ENCODE measurements at regions of chr11 and their contacts with region 1.

Region 1: GRCh38 chr11:66616379-66617154 is at the start of gene RBM14:
- DNase-seq: peak; percentile 99 to 100 (median 99)
- H3K4me3 ChIP-seq: peak within 1 kb of the TSS; percentile 70 to 99
- H3K4me3 Mint-ChIP-seq: peak within 1 kb of the TSS; percentile 96 to 100 (median 98)
- H3K27ac ChIP-seq: peak within 1 kb of the TSS; percentile 97
- H3K27ac Mint-ChIP-seq: peak within 1 kb of the TSS; percentile 98 to 100 (median 99)
- H3K4me1 ChIP-seq: peaks cover 40% of the 10 kb centered on the region
- H3K4me1 Mint-ChIP-seq: peaks cover 30 to 63% (median 40%) of the 10 kb centered on the region in 4 donors
- H3K27me3 ChIP-seq: no peaks in the 10 kb centered on the region
- H3K27me3 Mint-ChIP-seq: no peaks in the 10 kb centered on the region
- total RNA-seq, gene RBM14: 158 to 196 TPM

Region 2: GRCh38 chr11:65625628-65626342 is 990.8 kb before region 1 on chr11:
- CTCF ChIA-PET with region 1: no interaction called
- POLR2A ChIA-PET with region 1: no interaction called
- intact Hi-C with region 1: no loop called
- DNase-seq: peak in 4 of 5 donors; percentile 57 to 65 (median 62)
- H3K4me3 ChIP-seq: no peak overlapping the region
- H3K4me3 Mint-ChIP-seq: no peak overlapping the region
- H3K27ac ChIP-seq: no peak overlapping the region
- H3K27ac Mint-ChIP-seq: peak overlapping the region in 3 of 7 donors; percentile 60 to 85 (median 73)
- H3K4me1 ChIP-seq: no peaks in the 10 kb centered on the region
- H3K4me1 Mint-ChIP-seq: peaks cover 6 to 18% (median 6%) of the 10 kb centered on the region in 4 donors
- H3K27me3 ChIP-seq: no peaks in the 10 kb centered on the region
- H3K27me3 Mint-ChIP-seq: no peaks in the 10 kb centered on the region

Region 3: GRCh38 chr11:66480117-66480938 is 136.2 kb before region 1 on chr11 and contains the start of gene DPP3:
- CTCF ChIA-PET with region 1: no interaction called
- POLR2A ChIA-PET with region 1: interaction called, 10 read pairs
- intact Hi-C with region 1: no loop called
- DNase-seq: peak; percentile 94 to 96 (median 96)
- H3K4me3 ChIP-seq: peak within 1 kb of the TSS; percentile 88 to 90
- H3K4me3 Mint-ChIP-seq: peak within 1 kb of the TSS; percentile 87 to 96 (median 90)
- H3K27ac ChIP-seq: peak within 1 kb of the TSS; percentile 81
- H3K27ac Mint-ChIP-seq: peak within 1 kb of the TSS; percentile 78 to 94 (median 91)
- H3K4me1 ChIP-seq: peaks cover 20% of the 10 kb centered on the region
- H3K4me1 Mint-ChIP-seq: peaks cover 13 to 48% (median 21%) of the 10 kb centered on the region in 4 donors
- H3K27me3 ChIP-seq: no peaks in the 10 kb centered on the region
- H3K27me3 Mint-ChIP-seq: no peaks in the 10 kb centered on the region
- total RNA-seq, gene DPP3: 21.0 to 24.0 TPM

Region 4: GRCh38 chr11:66568124-66568916 is 48.2 kb before region 1 on chr11 and contains the start of gene CTSF:
- CTCF ChIA-PET with region 1: no interaction called
- POLR2A ChIA-PET with region 1: interaction called, 12 read pairs
- intact Hi-C with region 1: no loop called
- DNase-seq: peak; percentile 49 to 72 (median 56)
- H3K4me3 ChIP-seq: peak within 1 kb of the TSS in 1 of 2 donors; percentile 50
- H3K4me3 Mint-ChIP-seq: peak within 1 kb of the TSS; percentile 73 to 87 (median 82)
- H3K27ac ChIP-seq: peak within 1 kb of the TSS; percentile 25
- H3K27ac Mint-ChIP-seq: peak within 1 kb of the TSS in 4 of 7 donors; percentile 48 to 85 (median 68)
- H3K4me1 ChIP-seq: peaks cover 7% of the 10 kb centered on the region
- H3K4me1 Mint-ChIP-seq: peaks cover 2 to 13% (median 6%) of the 10 kb centered on the region in 4 donors
- H3K27me3 ChIP-seq: no peaks in the 10 kb centered on the region
- H3K27me3 Mint-ChIP-seq: peaks cover 0 to 6% of the 10 kb centered on the region in 2 donors
- total RNA-seq, gene CTSF: 28.1 to 31.7 TPM

Region 5: DNA sequence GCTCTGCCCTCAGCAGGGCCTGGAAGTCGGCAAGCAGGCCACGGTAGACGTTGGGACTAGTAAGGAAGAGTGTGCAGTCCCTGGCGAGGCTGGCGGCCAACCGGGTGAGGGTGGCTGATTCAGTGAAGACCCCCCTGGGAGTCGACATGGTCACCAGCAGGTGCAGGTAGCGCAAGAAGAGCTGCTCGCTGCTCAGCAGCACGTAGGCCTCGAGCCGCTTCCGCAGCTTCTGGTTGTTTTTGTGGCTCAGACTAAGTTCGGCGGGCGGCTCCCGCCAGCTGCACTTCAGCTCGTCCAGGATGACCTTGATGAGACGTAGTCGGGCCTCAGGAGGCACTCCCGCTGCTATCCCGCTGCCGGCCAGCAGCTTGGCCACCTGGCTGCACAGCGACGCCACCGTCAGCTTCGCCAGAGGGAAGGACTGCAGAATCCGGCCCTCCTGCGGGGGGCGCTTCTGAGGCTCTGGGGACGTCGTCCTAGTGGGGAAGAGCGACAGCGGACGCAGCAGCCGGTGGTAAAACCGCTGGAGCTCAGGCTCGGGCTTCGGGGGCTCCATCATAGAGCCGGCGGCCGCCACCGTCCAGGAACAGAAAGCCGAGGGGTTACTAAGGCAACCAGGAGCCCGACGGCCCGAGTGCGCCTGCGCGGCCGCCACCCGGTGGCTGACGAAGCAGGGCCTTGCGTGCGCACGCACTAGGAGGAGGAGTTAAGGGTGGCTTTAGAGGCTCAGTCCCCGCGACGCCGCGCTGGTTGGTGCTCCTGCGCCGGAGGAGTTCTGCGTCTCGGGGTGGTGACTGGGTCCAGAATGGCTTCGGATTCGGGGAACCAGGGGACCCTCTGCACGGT is 23.9 kb before region 1 on chr11 and contains the starts of genes CCDC87 and CCS:
- CTCF ChIA-PET with region 1: interaction called, 7 read pairs
- POLR2A ChIA-PET with region 1: interaction called, 69 read pairs
- intact Hi-C with region 1: loop called (anchors 1 kb)
- DNase-seq: peak; percentile 95 to 98 (median 97)
- H3K4me3 ChIP-seq: peak within 1 kb of the TSS; percentile 71 to 98
- H3K4me3 Mint-ChIP-seq: peak within 1 kb of the TSS; percentile 98 to 100 (median 99)
- H3K27ac ChIP-seq: peak within 1 kb of the TSS; percentile 88
- H3K27ac Mint-ChIP-seq: peak within 1 kb of the TSS; percentile 96 to 100 (median 100)
- H3K4me1 ChIP-seq: peaks cover 35% of the 10 kb centered on the region
- H3K4me1 Mint-ChIP-seq: peaks cover 16 to 42% (median 27%) of the 10 kb centered on the region in 4 donors
- H3K27me3 ChIP-seq: no peaks in the 10 kb centered on the region
- H3K27me3 Mint-ChIP-seq: no peaks in the 10 kb centered on the region
- total RNA-seq, gene CCDC87: not detected
- total RNA-seq, gene CCS: 61.0 to 61.5 TPM

Region 6: DNA sequence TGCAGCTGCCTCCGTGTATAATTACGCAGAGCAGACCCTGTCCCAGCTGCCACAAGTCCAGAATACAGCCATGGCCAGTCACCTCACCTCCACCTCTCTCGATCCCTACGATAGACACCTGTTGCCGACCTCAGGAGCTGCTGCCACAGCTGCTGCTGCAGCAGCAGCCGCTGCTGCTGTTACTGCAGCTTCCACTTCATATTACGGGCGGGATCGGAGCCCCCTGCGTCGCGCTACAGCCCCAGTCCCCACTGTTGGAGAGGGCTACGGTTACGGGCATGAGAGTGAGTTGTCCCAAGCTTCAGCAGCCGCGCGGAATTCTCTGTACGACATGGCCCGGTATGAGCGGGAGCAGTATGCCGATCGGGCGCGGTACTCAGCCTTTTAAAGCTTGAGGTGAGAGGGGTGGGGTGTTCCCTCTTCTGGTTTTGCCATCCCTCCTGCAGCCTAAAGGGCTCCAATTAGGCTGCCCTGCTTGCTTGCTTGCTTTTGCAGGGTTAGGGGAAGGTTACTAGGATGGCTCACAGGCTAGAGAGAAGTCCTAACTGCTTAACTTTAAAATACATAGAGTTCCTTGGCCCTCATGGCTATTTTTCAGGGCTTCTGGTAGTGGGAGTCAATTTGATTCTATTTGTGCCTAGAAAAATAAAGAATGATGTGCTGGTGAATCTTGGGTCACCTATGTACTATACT is 27.3 kb after region 1 on chr11:
- CTCF ChIA-PET with region 1: interaction called, 35 read pairs
- POLR2A ChIA-PET with region 1: interaction called, 442 read pairs
- intact Hi-C with region 1: no loop called
- DNase-seq: no peak
- H3K4me3 ChIP-seq: no peak overlapping the region
- H3K4me3 Mint-ChIP-seq: peak overlapping the region in 7 of 8 donors; percentile 43 to 99 (median 97)
- H3K27ac ChIP-seq: no peak overlapping the region
- H3K27ac Mint-ChIP-seq: peak overlapping the region in 3 of 7 donors; percentile 5 to 99 (median 70)
- H3K4me1 ChIP-seq: peaks cover 81% of the 10 kb centered on the region
- H3K4me1 Mint-ChIP-seq: peaks cover 78 to 94% (median 86%) of the 10 kb centered on the region in 4 donors
- H3K27me3 ChIP-seq: no peaks in the 10 kb centered on the region
- H3K27me3 Mint-ChIP-seq: no peaks in the 10 kb centered on the region

Region 7: DNA sequence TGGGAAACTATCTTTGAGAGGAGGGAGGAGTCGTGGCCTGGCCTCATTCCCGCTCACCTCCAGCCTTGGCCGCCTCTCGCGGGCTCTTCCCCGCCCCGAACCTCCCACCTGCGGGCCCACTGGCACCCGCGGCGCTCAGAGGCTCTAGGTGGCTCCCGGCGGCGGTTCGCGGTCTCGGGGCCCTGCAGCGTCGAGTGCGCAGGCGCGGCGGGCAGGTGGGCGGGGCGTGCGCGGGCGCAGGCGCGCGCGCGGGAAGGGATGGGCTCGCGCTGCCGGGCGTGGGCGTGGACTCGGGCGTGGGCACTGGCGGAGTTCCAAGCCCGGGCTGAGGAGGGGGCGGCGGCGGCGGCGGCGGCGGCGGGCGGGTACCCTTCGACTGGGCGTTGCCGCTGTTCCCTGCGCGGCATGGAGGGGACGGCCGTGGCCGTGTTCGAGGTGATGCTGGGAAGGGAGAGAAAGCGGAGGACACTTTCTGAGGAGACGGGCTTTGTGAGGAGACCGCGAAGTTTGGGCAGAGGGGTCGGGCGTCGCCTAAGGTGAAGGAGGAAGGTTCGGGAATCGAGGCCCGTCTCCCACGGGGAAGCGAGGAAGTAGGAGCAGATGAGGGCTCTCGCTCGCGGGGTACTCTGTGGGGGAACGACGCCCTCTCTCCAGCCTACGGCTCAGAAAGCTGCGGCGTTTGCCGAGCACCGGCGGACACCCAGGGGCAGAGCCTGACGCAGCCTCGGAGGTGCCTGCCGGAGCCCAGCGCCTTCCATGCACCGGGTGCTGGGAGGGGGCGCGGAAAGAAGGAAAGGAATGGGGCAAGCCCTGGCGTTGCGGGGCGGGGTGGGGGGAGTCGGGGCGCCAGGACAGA is 128.1 kb after region 1 on chr11:
- CTCF ChIA-PET with region 1: no interaction called
- POLR2A ChIA-PET with region 1: interaction called, 3 read pairs
- intact Hi-C with region 1: loop called (anchors 5 kb)
- DNase-seq: peak; percentile 87 to 94 (median 91)
- H3K4me3 ChIP-seq: peak overlapping the region; percentile 76 to 78
- H3K4me3 Mint-ChIP-seq: peak overlapping the region; percentile 87 to 97 (median 94)
- H3K27ac ChIP-seq: peak overlapping the region; percentile 66
- H3K27ac Mint-ChIP-seq: peak overlapping the region; percentile 74 to 96 (median 89)
- H3K4me1 ChIP-seq: peaks cover 10% of the 10 kb centered on the region
- H3K4me1 Mint-ChIP-seq: peaks cover 2 to 13% (median 7%) of the 10 kb centered on the region in 4 donors
- H3K27me3 ChIP-seq: no peaks in the 10 kb centered on the region
- H3K27me3 Mint-ChIP-seq: no peaks in the 10 kb centered on the region